HepG2 (cell line): ENCODE measurements at regions of chr2 and their contacts with region 1.

Region 1: DNA sequence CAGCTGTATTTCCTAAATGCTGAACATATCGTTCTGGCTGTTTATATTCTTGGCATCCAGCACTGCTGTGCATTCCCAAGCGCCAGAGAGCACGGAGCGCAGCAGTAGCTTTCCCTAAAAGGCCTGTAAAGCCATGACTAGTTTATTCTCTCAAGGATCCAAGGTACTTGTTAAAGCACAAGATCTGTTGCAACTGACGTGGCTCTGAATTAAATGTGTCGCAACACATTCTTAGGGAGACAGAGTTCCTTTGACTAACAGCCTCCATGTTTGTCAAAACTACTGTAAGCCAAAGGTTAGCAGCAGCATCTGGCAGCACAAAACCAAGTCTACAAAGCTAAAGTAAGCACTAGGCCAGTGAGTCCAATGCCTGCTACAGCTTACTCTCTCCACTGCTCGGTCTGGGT is 188.6 kb upstream of the FN1 start:
- DNase-seq: peak; percentile 95
- ATAC-seq: peak; percentile 91
- H3K4me3 ChIP-seq: no peak overlapping the region
- H3K27ac ChIP-seq: peak overlapping the region; percentile 69
- H3K4me1 ChIP-seq: peaks cover 70% of the 10 kb centered on the region
- H3K27me3 ChIP-seq: no peaks in the 10 kb centered on the region
- CTCF ChIP-seq: no peak
- EP300 ChIP-seq: peak; percentile 36 to 92; a peak in 3 of 4 replicates
- POLR2A ChIP-seq: no peak; a peak in 1 of 4 replicates
- RAD21 ChIP-seq: 0 out of 2 replicates have a peak, but pooled peaks have one; percentile 15

Region 2: DNA sequence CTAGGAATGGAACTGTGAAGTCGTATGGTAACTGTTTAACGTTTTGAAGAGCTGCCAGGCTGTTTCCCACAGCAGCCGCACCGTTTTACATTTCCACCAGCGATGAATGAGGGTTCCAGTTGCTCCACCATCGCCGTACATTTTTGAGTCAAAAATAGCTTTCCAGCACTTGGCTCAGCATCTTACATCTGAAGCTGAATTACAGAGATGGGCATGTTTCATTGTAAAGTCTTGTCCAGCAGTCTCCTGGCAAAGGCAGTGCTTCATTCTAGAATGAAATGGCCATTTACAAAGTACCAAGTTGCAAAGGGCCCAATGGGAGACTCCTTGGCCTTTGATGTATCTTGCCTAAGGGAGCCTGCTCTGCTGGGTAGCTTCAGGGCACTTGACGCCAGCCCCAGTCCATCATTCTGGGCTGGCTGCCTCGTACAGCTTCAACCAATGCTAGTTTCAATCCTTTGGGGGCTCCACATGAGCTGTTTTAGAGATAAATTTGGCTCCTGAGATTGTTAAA is 267.4 kb before region 1 on chr2:
- CTCF ChIA-PET with region 1: no interaction called
- POLR2A ChIA-PET with region 1: no interaction called
- in situ Hi-C with region 1: no loop called
- intact Hi-C with region 1: no loop called
- DNase-seq: no peak
- ATAC-seq: peak; percentile 29
- H3K4me3 ChIP-seq: no peak overlapping the region
- H3K27ac ChIP-seq: no peak overlapping the region
- H3K4me1 ChIP-seq: no peaks in the 10 kb centered on the region
- H3K27me3 ChIP-seq: no peaks in the 10 kb centered on the region
- CTCF ChIP-seq: no peak
- EP300 ChIP-seq: no peak
- POLR2A ChIP-seq: no peak
- RAD21 ChIP-seq: no peak

Region 3: GRCh38 chr2:215635788-215636139 is 11.3 kb after region 1 on chr2:
- CTCF ChIA-PET with region 1: no interaction called
- POLR2A ChIA-PET with region 1: interaction called, 7 read pairs
- in situ Hi-C with region 1: no loop called
- intact Hi-C with region 1: loop called (anchors 1 kb)
- DNase-seq: peak; percentile 55
- ATAC-seq: peak; percentile 97
- H3K4me3 ChIP-seq: no peak overlapping the region
- H3K27ac ChIP-seq: no peak overlapping the region
- H3K4me1 ChIP-seq: peaks cover 16% of the 10 kb centered on the region
- H3K27me3 ChIP-seq: no peaks in the 10 kb centered on the region
- CTCF ChIP-seq: peak; percentile 61
- EP300 ChIP-seq: 0 out of 4 replicates have a peak, but pooled peaks of 1 of the 2 experiments have one; percentile 33
- POLR2A ChIP-seq: no peak
- RAD21 ChIP-seq: peak; percentile 64; the same call in 1 of the 2 replicates